Mammary epithelial cell (primary cell): ENCODE measurements at regions of chr21 and their contacts with region 1.

Region 1: GRCh38 chr21:38219049-38219628 is 37.7 kb upstream of the KCNJ15 start:
- DNase-seq: peak; percentile 63
- H3K4me3 ChIP-seq: no peak overlapping the region
- H3K27ac ChIP-seq: no peak overlapping the region
- H3K4me1 ChIP-seq: peaks cover 4% of the 10 kb centered on the region
- H3K27me3 ChIP-seq: no peaks in the 10 kb centered on the region
- CTCF ChIP-seq: peak; percentile 96 to 99

Region 2: DNA sequence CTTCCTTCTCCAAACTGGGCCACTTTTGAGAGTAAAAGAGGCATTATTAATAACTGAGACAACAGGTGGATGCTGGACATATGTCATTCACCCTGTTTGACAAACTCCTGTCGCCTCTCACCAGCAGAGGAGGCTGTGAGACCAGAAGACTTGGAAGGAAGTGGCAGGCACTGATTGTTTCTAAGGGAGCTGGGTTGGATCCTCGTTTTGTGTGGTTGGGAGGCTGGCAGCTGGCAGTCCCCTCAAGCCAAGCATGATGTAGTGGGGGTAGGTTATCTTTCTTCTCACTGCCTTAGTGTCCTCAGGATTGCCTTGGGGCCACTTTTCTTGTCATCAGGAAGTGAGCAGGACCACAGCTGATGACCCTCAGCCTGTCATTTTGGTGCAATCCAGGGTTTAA is 48.9 kb before region 1 on chr21:
- CTCF ChIA-PET with region 1: no interaction called
- dilution Hi-C with region 1: no loop called
- in situ Hi-C with region 1: no loop called
- intact Hi-C with region 1: loop called (anchors 5 kb)
- DNase-seq: peak; percentile 43
- H3K4me3 ChIP-seq: no peak overlapping the region
- H3K27ac ChIP-seq: no peak overlapping the region
- H3K4me1 ChIP-seq: peaks cover 9% of the 10 kb centered on the region
- H3K27me3 ChIP-seq: no peaks in the 10 kb centered on the region
- CTCF ChIP-seq: peak; percentile 73 to 79

Region 3: GRCh38 chr21:38234395-38235151 is 15.4 kb after region 1 on chr21:
- CTCF ChIA-PET with region 1: no interaction called
- dilution Hi-C with region 1: no loop called
- in situ Hi-C with region 1: no loop called
- intact Hi-C with region 1: loop called (anchors 1 kb)
- DNase-seq: peak; percentile 92
- H3K4me3 ChIP-seq: peak overlapping the region in 1 of 3 experiments; percentile 7
- H3K27ac ChIP-seq: peak overlapping the region; percentile 88
- H3K4me1 ChIP-seq: peaks cover 24% of the 10 kb centered on the region
- H3K27me3 ChIP-seq: no peaks in the 10 kb centered on the region
- CTCF ChIP-seq: no peak

Region 4: DNA sequence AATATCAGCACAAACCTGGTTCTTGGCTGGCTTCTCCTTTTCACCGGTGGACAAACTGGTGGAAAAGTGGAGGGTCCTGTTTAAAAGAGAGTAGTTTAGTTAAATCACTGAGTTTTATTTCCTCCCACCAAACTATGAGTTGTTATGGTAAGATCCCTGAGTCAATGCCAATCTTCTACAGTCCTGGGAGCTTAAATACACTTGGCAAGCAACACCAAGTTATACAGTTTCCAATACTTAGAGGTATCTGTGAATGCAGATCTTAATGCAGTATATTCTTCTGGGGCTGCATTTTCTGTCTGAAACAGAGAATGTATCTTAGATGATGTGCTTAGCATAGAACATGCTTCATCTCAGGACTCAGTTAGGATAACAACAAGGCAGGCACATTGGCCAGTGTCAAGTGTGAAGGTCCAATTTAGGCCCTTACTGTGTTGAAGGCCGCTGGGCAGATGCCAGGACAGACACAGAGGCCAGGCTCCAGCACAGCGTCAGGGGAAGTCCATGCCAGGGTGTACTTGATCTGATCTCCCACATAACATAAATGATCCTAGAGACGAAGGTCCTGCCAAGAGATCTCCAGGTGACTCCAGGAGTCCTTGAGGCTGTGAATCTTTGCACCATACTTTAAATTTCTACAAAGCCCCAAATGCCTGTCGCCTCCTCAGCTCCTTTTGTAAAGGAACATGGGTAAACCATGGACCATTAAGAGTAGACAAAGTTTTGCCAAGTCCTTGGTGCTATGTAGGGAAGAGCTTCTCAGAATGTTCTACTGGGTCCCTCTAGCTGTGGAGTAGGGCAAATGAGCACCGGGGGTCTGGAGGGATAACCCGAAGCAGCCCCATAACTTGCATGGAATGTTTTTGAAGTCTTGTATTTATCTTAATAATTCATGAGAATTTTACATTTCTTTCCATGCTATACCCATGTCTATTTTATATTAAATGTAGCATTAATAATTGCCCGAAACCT is 114.4 kb after region 1 on chr21:
- CTCF ChIA-PET with region 1: no interaction called
- dilution Hi-C with region 1: no loop called
- in situ Hi-C with region 1: no loop called
- intact Hi-C with region 1: loop called (anchors 1 kb)
- DNase-seq: no peak
- H3K4me3 ChIP-seq: no peak overlapping the region
- H3K27ac ChIP-seq: no peak overlapping the region
- H3K4me1 ChIP-seq: no peaks in the 10 kb centered on the region
- H3K27me3 ChIP-seq: no peaks in the 10 kb centered on the region
- CTCF ChIP-seq: peak; percentile 16 to 47